ENCODE measurements at regions of chr9 and their contacts with region 1.

Region 1: DNA sequence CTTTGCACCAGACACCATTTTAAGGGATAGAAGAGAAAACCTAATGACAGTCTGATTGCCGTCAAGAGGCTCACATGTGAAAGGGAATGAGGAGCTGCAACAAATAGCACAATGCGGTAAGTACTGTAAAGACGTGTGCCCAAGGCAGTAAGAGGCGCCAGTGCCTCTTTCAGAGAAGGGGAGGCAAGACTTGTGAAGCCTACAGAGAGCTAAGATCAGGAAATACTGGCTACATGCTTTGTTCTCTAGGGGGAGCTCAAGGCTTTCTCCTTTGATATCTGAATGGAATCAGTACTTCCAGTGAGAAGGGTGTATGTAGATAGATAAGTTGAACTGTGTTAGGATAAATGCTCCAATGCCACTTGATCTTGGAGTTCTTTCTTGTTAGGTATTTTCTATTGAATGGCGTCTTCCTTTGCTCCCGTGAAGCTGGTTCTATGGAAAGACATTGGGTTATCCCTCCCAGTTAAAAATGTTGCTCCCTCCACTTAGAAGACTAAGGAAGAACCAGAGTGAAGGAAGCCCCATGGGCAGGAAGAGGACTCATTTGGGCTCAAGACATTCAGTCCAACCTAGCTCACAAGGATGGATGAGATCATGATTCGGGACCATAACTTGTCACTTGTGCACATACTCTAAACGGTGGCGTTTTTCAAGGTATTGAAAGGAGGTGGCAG is 23.5 kb upstream of the ALDOB start:
- DNase-seq: peak; percentile 76
- H3K4me3 ChIP-seq: peak overlapping the region in 1 of 2 experiments; percentile 4; a peak in 1 of 4 replicates
- H3K27ac ChIP-seq: no peak overlapping the region
- H3K4me1 ChIP-seq: no peaks in the 10 kb centered on the region
- H3K27me3 ChIP-seq: no peaks in the 10 kb centered on the region
- CTCF ChIP-seq: peak; percentile 86
- EP300 ChIP-seq: no peak
- RAD21 ChIP-seq: peak; percentile 96

Region 2: GRCh38 chr9:101437806-101438232 is 21.3 kb before region 1 on chr9:
- CTCF ChIA-PET with region 1: interaction called, 13 read pairs
- POLR2A ChIA-PET with region 1: no interaction called
- DNase-seq: no peak
- H3K4me3 ChIP-seq: no peak overlapping the region
- H3K27ac ChIP-seq: no peak overlapping the region
- H3K4me1 ChIP-seq: no peaks in the 10 kb centered on the region; a peak in 1 of 4 replicates
- H3K27me3 ChIP-seq: no peaks in the 10 kb centered on the region
- CTCF ChIP-seq: no peak
- EP300 ChIP-seq: no peak
- RAD21 ChIP-seq: no peak

Region 3: GRCh38 chr9:101479338-101480030 is 20.4 kb after region 1 on chr9:
- CTCF ChIA-PET with region 1: interaction called, 135 read pairs
- POLR2A ChIA-PET with region 1: no interaction called
- DNase-seq: no peak
- H3K4me3 ChIP-seq: no peak overlapping the region
- H3K27ac ChIP-seq: no peak overlapping the region
- H3K4me1 ChIP-seq: no peaks in the 10 kb centered on the region
- H3K27me3 ChIP-seq: no peaks in the 10 kb centered on the region
- CTCF ChIP-seq: no peak
- EP300 ChIP-seq: no peak
- RAD21 ChIP-seq: no peak

Region 4: DNA sequence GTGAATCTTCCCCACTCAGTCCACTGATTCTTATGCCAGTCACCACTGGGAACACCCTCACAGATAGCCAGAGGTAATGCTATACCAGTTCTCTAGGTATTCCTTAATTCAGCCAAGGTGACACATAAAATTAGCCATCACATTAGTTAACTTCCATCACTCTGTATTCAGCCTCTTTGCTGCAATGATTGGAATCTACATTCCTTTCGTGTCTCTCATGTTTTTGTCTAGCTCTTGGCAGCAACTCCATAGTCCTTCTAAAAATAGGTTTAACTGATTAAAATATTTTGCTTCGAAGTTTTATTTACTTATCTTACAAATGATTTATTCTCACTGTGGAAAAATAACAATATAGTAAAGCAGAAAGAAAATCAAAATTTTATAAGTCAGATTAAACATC is 55.0 kb after region 1 on chr9:
- CTCF ChIA-PET with region 1: interaction called, 11 read pairs
- POLR2A ChIA-PET with region 1: no interaction called
- DNase-seq: no peak
- H3K4me3 ChIP-seq: no peak overlapping the region
- H3K27ac ChIP-seq: no peak overlapping the region; a peak in 1 of 4 replicates
- H3K4me1 ChIP-seq: peaks cover 0 to 21% of the 10 kb centered on the region in 2 experiments; a peak in 2 of 4 replicates
- H3K27me3 ChIP-seq: no peaks in the 10 kb centered on the region
- CTCF ChIP-seq: no peak
- EP300 ChIP-seq: peak in 1 of 2 experiments; percentile 88; a peak in 2 of 4 replicates
- RAD21 ChIP-seq: no peak

Region 5: DNA sequence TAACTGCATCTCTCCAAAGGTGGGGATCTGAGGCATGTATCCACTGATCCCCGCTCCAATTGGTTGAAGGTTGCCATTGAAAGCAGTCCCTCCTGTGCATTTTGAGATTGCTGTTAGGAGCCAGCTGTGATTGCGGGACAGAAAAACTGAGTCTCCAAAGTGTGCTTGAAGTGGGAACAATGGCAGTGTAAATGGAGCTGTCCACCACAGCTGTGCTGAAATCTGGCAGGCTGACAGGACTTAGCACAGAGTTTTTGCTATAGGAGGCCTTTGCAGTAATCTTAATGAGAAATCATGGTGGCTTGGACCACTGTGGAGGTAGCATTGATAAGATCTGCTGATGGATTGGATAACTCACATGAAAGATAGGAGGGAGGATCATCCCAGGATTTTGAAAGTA is 77.8 kb after region 1 on chr9:
- CTCF ChIA-PET with region 1: interaction called, 363 read pairs
- POLR2A ChIA-PET with region 1: no interaction called
- DNase-seq: no peak
- H3K4me3 ChIP-seq: no peak overlapping the region
- H3K27ac ChIP-seq: no peak overlapping the region
- H3K4me1 ChIP-seq: peaks cover 0 to 12% of the 10 kb centered on the region in 2 experiments; a peak in 3 of 4 replicates
- H3K27me3 ChIP-seq: no peaks in the 10 kb centered on the region
- CTCF ChIP-seq: no peak
- EP300 ChIP-seq: no peak
- RAD21 ChIP-seq: no peak

Region 6: GRCh38 chr9:101593345-101593744 is 134.3 kb after region 1 on chr9:
- CTCF ChIA-PET with region 1: no interaction called
- POLR2A ChIA-PET with region 1: no interaction called
- DNase-seq: no peak
- H3K4me3 ChIP-seq: no peak overlapping the region
- H3K27ac ChIP-seq: no peak overlapping the region
- H3K4me1 ChIP-seq: no peaks in the 10 kb centered on the region
- H3K27me3 ChIP-seq: peaks cover 6% of the 10 kb centered on the region; the same call in 1 of the 2 replicates
- CTCF ChIP-seq: no peak
- EP300 ChIP-seq: no peak
- RAD21 ChIP-seq: no peak